Upper lobe of right lung (tissue), 1 donor: ENCODE measurements at regions of chr10 and their contacts with region 1.

Region 1: DNA sequence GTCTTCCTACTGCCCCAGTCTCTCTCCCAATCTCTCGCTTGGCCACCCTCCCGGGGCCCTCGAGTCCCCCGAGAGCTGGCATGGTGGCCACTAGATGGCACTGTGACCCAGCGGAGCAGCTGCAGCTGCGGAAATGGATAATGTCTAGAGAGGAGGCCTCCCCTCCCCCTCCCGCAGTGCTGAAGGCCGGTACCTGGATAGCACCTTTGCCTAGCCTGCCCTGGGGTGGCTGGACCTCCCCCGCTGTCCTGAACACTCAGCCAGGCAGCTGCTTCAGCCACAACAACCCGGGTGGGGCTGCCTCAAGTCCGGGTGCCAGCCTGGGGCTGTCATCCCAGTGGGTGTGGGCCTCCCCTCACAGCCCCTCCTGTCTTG is 65.2 kb downstream of the GOLGA7B start:
- DNase-seq: peak; percentile 90
- ATAC-seq: peak; percentile 93
- H3K4me3 ChIP-seq: no peak overlapping the region
- H3K27ac ChIP-seq: no peak overlapping the region
- H3K4me1 ChIP-seq: peaks cover 11% of the 10 kb centered on the region
- H3K27me3 ChIP-seq: no peaks in the 10 kb centered on the region
- CTCF ChIP-seq: peak; percentile 92

Region 2: GRCh38 chr10:98045785-98046389 is 131.1 kb after region 1 on chr10:
- intact Hi-C with region 1: loop called (anchors 10 kb)
- DNase-seq: peak; percentile 73
- ATAC-seq: peak; percentile 88
- H3K4me3 ChIP-seq: no peak overlapping the region
- H3K27ac ChIP-seq: no peak overlapping the region
- H3K4me1 ChIP-seq: no peaks in the 10 kb centered on the region
- H3K27me3 ChIP-seq: peaks cover 12% of the 10 kb centered on the region
- CTCF ChIP-seq: peak; percentile 88